Activated CD4-positive, alpha-beta memory T cell treated with anti-CD3 and anti-CD28 coated beads, Interleukin-2, amount 10 ng/mL, durations not matched to agents 7 days and 5 days (primary cell): ENCODE measurements at regions of chr4 and their contacts with region 1.

Region 1: DNA sequence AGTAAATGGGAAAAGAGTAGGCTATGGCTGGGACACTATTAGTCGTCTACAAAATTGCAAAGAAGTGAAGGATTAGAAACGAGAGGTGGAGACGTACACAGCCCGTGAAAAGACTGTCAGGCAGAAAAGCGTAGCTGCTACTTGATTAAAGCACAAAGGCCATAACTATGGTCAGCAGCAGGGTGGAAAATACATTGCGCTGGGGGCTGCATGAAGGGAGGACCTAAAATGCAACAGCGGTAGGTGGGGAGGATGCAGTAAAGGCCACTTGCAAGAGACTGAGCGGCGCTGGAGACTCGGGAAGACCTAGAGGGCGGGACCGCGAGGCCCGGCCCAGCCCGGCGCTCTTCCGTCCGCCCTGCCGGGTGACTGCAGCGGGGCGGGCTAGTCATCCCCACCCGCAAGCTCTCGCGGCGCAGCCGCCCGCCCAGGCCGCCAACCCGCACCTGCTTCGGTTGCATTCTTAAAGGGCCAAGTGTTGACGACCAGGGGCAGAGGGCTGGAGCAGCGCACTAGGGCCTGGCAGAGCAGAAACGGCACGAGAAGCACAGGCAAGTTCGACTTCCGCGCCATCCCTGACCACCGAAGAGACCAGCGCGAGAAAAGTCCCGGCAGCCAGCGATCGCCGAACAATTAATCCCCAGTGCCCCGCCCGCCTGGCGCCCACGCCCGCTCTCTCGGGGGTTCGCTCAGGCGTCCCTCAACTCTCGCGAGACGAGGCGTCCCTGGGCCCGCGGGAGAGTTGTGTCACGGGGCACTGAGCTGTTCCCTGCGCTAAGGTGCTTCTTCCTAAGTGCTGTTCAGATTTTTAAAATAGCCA is at the start of gene AGA:
- DNase-seq: peak; percentile 97
- H3K4me3 Mint-ChIP-seq: peak within 1 kb of the TSS; percentile 86
- H3K27ac Mint-ChIP-seq: peak within 1 kb of the TSS; percentile 89
- H3K4me1 Mint-ChIP-seq: peaks cover 37% of the 10 kb centered on the region
- H3K27me3 Mint-ChIP-seq: no peaks in the 10 kb centered on the region
- total RNA-seq, gene AGA: 21.5 to 23.6 TPM

Region 2: GRCh38 chr4:177108708-177109107 is 333.3 kb before region 1 on chr4:
- CTCF ChIA-PET with region 1: no interaction called
- POLR2A ChIA-PET with region 1: no interaction called
- DNase-seq: no peak
- H3K4me3 Mint-ChIP-seq: no peak overlapping the region
- H3K27ac Mint-ChIP-seq: no peak overlapping the region
- H3K4me1 Mint-ChIP-seq: no peaks in the 10 kb centered on the region
- H3K27me3 Mint-ChIP-seq: no peaks in the 10 kb centered on the region

Region 3: GRCh38 chr4:177242651-177243286 is 199.2 kb before region 1 on chr4:
- CTCF ChIA-PET with region 1: no interaction called
- POLR2A ChIA-PET with region 1: interaction called, 10 read pairs
- DNase-seq: no peak
- H3K4me3 Mint-ChIP-seq: no peak overlapping the region
- H3K27ac Mint-ChIP-seq: peak overlapping the region; percentile 29
- H3K4me1 Mint-ChIP-seq: peaks cover 15% of the 10 kb centered on the region
- H3K27me3 Mint-ChIP-seq: peaks cover 3% of the 10 kb centered on the region

Region 4: DNA sequence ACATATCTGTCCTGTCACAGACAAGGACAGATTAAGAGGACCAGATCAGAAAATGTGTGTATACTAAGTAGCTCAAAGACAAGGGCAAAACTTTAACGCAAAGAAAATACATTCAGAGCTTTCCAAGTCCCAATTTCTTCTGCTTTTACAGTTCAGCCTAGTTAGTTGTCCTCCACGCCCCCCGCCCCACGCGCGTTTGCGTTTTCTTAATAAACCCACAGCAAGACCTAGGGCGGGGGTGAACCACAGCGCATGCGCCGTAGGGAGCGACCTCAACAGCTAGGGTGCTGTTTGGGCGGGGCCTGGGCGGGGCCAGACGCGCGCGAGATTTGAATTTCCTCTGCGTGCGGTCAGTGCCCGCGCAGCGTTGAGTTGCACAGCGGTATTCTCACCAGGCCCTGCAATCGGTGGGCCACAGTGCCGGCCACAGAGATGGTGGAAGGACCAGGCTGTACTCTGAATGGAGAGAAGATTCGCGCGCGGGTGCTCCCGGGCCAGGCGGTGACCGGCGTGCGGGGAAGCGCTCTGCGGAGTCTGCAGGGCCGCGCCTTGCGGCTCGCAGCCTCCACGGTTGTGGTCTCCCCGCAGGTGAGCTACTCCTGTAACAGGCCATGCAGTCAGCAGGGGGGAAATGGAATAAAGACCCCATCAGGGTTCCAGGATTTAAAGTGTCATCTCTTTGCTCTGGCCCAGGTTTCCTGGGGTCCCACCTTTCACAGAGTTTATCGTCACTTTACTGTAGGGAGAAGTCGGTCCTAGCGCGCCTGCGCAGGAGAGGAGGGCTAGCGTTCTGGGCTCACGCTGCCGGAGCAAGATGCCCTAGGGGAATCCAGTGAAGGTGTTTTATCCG is 132.3 kb before region 1 on chr4 and contains the start of gene NEIL3:
- CTCF ChIA-PET with region 1: interaction called, 24 read pairs
- POLR2A ChIA-PET with region 1: interaction called, 147 read pairs
- DNase-seq: peak; percentile 97
- H3K4me3 Mint-ChIP-seq: peak within 1 kb of the TSS; percentile 92
- H3K27ac Mint-ChIP-seq: peak within 1 kb of the TSS; percentile 93
- H3K4me1 Mint-ChIP-seq: peaks cover 54% of the 10 kb centered on the region
- H3K27me3 Mint-ChIP-seq: no peaks in the 10 kb centered on the region
- total RNA-seq, gene NEIL3: 29.3 to 30.3 TPM

Region 5: GRCh38 chr4:177393236-177393635 is 48.8 kb before region 1 on chr4:
- CTCF ChIA-PET with region 1: interaction called, 6 read pairs
- POLR2A ChIA-PET with region 1: interaction called, 23 read pairs
- DNase-seq: peak; percentile 50
- H3K4me3 Mint-ChIP-seq: no peak overlapping the region
- H3K27ac Mint-ChIP-seq: peak overlapping the region; percentile 60
- H3K4me1 Mint-ChIP-seq: peaks cover 20% of the 10 kb centered on the region
- H3K27me3 Mint-ChIP-seq: peaks cover 9% of the 10 kb centered on the region

Region 6: GRCh38 chr4:177427192-177427591 is 14.8 kb before region 1 on chr4:
- CTCF ChIA-PET with region 1: interaction called, 4 read pairs
- POLR2A ChIA-PET with region 1: interaction called, 22 read pairs
- DNase-seq: no peak
- H3K4me3 Mint-ChIP-seq: no peak overlapping the region
- H3K27ac Mint-ChIP-seq: no peak overlapping the region
- H3K4me1 Mint-ChIP-seq: no peaks in the 10 kb centered on the region
- H3K27me3 Mint-ChIP-seq: no peaks in the 10 kb centered on the region